ENCODE measurements at regions of chr2 and their contacts with region 1.

Region 1: GRCh38 chr2:236503100-236503499 is 66.5 kb upstream of the ACKR3 start:
- DNase-seq: no peak
- H3K4me3 ChIP-seq: no peak overlapping the region
- H3K27ac ChIP-seq: no peak overlapping the region
- H3K4me1 ChIP-seq: no peaks in the 10 kb centered on the region
- H3K27me3 ChIP-seq: peaks cover 31% of the 10 kb centered on the region
- CTCF ChIP-seq: 0 out of 2 replicates have a peak, but pooled peaks have one; percentile 12

Region 2: GRCh38 chr2:236143811-236144210 is 359.3 kb before region 1 on chr2:
- CTCF ChIA-PET with region 1: no interaction called
- POLR2A ChIA-PET with region 1: no interaction called
- intact Hi-C with region 1: no loop called
- DNase-seq: no peak
- H3K4me3 ChIP-seq: no peak overlapping the region
- H3K27ac ChIP-seq: no peak overlapping the region
- H3K4me1 ChIP-seq: no peaks in the 10 kb centered on the region
- H3K27me3 ChIP-seq: peaks cover 6% of the 10 kb centered on the region
- CTCF ChIP-seq: no peak

Region 3: GRCh38 chr2:238438856-238439849 is 1936.1 kb after region 1 on chr2:
- CTCF ChIA-PET with region 1: no interaction called
- POLR2A ChIA-PET with region 1: interaction called, 22 read pairs
- intact Hi-C with region 1: no loop called
- DNase-seq: no peak
- H3K4me3 ChIP-seq: no peak overlapping the region
- H3K27ac ChIP-seq: no peak overlapping the region
- H3K4me1 ChIP-seq: no peaks in the 10 kb centered on the region
- H3K27me3 ChIP-seq: no peaks in the 10 kb centered on the region
- CTCF ChIP-seq: no peak

Measured in A673 (cell line).